IMR-90 (cell line): ENCODE measurements at regions of chr22 and their contacts with region 1.

Region 1: DNA sequence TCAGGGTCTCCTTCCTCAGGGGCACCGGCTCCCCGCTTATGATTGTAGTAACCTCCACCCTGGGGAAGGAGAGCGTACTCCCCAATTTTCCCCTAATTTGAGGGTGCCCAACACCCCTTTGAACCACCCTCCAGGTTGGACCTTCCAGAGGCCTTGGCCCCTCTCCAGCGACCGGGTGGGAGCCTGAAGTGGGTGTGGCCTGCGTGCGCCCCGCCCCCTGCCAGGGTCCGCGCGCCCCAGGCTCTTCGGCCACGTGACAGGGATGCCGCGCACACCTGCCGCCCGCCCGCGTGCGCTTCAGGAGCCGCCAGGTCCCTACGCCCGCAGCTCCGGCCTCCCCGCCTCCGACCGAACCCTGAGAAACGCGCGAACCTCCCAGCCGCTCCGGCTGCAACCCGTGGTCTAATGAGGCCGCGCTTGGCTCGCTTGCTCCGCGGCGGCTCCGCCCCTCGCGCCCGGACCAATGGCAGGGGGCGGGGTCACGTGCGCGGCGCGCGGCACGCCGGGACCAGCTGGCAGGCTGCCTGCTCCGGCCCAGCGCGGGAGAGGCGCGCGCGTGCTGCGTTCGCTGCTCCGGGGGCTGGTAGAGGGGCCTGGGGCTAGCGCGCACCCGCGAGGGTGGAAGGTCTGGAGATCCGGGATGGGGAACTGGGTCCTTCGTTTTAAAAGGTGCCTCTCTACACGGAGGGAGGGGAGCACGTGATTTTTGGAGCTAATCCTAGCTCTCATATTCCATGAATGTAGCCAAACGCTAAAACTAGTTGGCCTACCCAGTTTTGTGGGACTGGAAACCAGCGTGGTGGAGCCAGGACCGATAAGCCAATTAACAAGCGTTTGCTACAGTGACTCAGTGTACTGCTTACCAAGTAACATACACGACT is at the start of gene FOXRED2:
- DNase-seq: peak; percentile 68
- ATAC-seq: peak; percentile 92
- H3K4me3 ChIP-seq: peak within 1 kb of the TSS; percentile 58
- H3K27ac ChIP-seq: peak within 1 kb of the TSS; percentile 54
- H3K4me1 ChIP-seq: no peaks in the 10 kb centered on the region
- H3K27me3 ChIP-seq: no peaks in the 10 kb centered on the region
- CTCF ChIP-seq: no peak
- POLR2A ChIP-seq: peak; percentile 56; the same call in 1 of the 2 replicates
- RAD21 ChIP-seq: no peak
- total RNA-seq, gene FOXRED2: 1.6 and 1.7 TPM in 2 replicates

Region 2: DNA sequence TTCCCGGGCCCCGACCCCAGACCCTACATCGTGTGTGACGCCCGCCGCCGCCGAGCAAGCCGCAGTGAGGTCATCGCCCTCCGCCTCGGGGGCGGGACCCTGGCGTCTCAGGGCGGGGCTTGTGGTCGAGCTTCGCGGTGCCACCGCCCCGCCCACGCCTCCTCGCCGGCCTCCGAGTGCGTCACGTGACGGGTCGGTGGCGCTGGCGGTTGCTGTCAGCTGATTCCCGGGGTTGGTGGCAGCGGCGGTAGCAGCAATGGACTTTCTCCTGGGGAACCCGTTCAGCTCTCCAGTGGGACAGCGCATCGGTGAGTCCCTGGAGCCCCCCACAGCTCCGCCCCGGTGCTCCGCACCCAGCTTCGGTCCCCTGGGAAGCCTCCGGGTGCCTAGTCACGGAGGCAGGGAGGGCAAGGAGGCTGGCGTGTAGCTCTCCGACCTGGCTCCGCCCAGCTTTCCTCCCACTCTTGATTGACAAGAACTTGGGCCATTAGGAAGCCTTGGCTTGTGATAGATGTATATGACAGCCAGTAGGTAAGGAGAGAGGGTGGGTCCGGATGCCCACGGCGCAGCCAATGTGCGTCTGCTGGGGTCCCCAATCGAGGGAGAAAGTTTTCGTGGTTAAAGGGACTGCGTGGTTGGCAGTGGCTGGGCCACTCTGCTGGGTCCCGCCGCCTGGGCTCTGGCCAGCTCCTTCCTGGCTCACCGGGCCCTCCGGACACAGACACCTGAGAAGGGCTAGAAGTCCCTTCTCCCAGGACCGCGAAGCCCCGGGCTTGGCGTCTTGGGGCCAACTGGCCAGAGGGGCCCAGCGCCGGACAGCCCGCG is 1207.0 kb before region 1 on chr22 and contains the start of gene TOM1:
- CTCF ChIA-PET with region 1: no interaction called
- POLR2A ChIA-PET with region 1: no interaction called
- dilution Hi-C with region 1: no loop called
- in situ Hi-C with region 1: loop called (anchors 25 kb)
- intact Hi-C with region 1: no loop called
- DNase-seq: peak; percentile 99
- ATAC-seq: peak; percentile 93
- H3K4me3 ChIP-seq: peak within 1 kb of the TSS; percentile 64
- H3K27ac ChIP-seq: peak within 1 kb of the TSS; percentile 78
- H3K4me1 ChIP-seq: peaks cover 6% of the 10 kb centered on the region
- H3K27me3 ChIP-seq: no peaks in the 10 kb centered on the region
- CTCF ChIP-seq: no peak
- POLR2A ChIP-seq: peak; percentile 93
- RAD21 ChIP-seq: no peak
- total RNA-seq, gene TOM1: 38.0 and 39.4 TPM in 2 replicates

Region 3: DNA sequence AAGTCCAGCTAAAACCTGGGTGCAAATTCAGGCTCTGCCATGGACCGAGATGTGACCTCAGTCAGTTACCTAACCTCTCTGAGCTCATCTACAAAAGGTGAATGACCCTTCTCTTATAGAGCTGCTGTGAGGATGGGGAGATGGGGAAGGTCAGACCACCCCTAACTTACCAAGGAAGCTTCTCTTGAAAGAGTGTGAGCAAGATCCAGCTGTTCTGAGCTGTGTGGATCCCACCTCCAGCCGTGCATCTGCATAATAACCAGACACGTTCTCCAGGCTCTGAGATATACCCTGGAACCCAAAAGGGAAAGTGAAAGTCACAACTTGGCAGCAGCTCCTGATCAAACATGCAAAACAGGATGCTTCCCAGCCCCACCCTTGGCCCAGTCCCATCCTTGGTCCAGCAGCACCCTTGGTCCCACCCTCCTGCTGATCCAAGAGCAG is 346.4 kb before region 1 on chr22 and contains the start of gene APOL3:
- CTCF ChIA-PET with region 1: no interaction called
- POLR2A ChIA-PET with region 1: no interaction called
- dilution Hi-C with region 1: no loop called
- in situ Hi-C with region 1: no loop called
- intact Hi-C with region 1: no loop called
- DNase-seq: peak; percentile 47
- ATAC-seq: 0 out of 2 replicates have a peak, but pooled peaks have one; percentile 7
- H3K4me3 ChIP-seq: no peak within 1 kb of the TSS
- H3K27ac ChIP-seq: no peak within 1 kb of the TSS
- H3K4me1 ChIP-seq: peaks cover 11% of the 10 kb centered on the region; the same call in 1 of the 2 replicates
- H3K27me3 ChIP-seq: peaks cover 21% of the 10 kb centered on the region
- CTCF ChIP-seq: no peak
- POLR2A ChIP-seq: no peak
- RAD21 ChIP-seq: no peak
- total RNA-seq, gene APOL3: 1.7 and 2.3 TPM in 2 replicates

Region 4: GRCh38 chr22:36425977-36426523 is 80.8 kb before region 1 on chr22:
- CTCF ChIA-PET with region 1: no interaction called
- POLR2A ChIA-PET with region 1: no interaction called
- dilution Hi-C with region 1: no loop called
- in situ Hi-C with region 1: no loop called
- intact Hi-C with region 1: no loop called
- DNase-seq: peak; percentile 53
- ATAC-seq: peak; percentile 79
- H3K4me3 ChIP-seq: no peak overlapping the region
- H3K27ac ChIP-seq: peak overlapping the region; percentile 30; the same call in 1 of the 2 replicates
- H3K4me1 ChIP-seq: peaks cover 18% of the 10 kb centered on the region
- H3K27me3 ChIP-seq: no peaks in the 10 kb centered on the region
- CTCF ChIP-seq: no peak
- POLR2A ChIP-seq: no peak
- RAD21 ChIP-seq: no peak

Region 5: DNA sequence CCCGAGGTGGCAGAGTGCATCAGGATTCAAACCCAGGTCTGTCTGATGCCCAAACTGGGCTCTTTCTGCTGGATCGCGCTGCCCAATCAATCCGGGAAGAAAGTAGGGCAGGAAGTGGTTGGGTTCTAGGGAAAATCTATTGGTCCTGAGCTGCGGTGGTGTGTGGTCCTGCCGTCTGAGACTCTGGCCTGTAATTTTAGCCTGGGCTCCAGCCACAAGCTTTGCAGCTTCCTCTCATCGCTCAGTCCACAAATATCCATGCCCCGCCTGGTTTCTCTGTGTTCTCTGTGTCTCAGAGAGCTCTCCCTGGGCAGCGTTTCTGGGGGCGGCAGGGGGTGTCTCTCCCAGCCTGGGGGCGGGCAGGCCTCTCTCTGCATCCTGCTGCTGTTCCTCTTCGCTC is 178.0 kb after region 1 on chr22:
- CTCF ChIA-PET with region 1: no interaction called
- POLR2A ChIA-PET with region 1: no interaction called
- dilution Hi-C with region 1: no loop called
- in situ Hi-C with region 1: no loop called
- intact Hi-C with region 1: no loop called
- DNase-seq: no peak
- ATAC-seq: no peak
- H3K4me3 ChIP-seq: no peak overlapping the region
- H3K27ac ChIP-seq: no peak overlapping the region
- H3K4me1 ChIP-seq: no peaks in the 10 kb centered on the region
- H3K27me3 ChIP-seq: peaks cover 45% of the 10 kb centered on the region
- CTCF ChIP-seq: no peak
- POLR2A ChIP-seq: no peak
- RAD21 ChIP-seq: no peak

Region 6: GRCh38 chr22:36839356-36840073 is 332.6 kb after region 1 on chr22:
- CTCF ChIA-PET with region 1: no interaction called
- POLR2A ChIA-PET with region 1: no interaction called
- dilution Hi-C with region 1: no loop called
- in situ Hi-C with region 1: no loop called
- intact Hi-C with region 1: no loop called
- DNase-seq: peak; percentile 9
- ATAC-seq: no peak
- H3K4me3 ChIP-seq: no peak overlapping the region
- H3K27ac ChIP-seq: no peak overlapping the region
- H3K4me1 ChIP-seq: no peaks in the 10 kb centered on the region
- H3K27me3 ChIP-seq: peaks cover 17% of the 10 kb centered on the region
- CTCF ChIP-seq: no peak
- POLR2A ChIP-seq: no peak
- RAD21 ChIP-seq: no peak